ENCODE measurements at regions of chr13 and their contacts with region 1.

Region 1: DNA sequence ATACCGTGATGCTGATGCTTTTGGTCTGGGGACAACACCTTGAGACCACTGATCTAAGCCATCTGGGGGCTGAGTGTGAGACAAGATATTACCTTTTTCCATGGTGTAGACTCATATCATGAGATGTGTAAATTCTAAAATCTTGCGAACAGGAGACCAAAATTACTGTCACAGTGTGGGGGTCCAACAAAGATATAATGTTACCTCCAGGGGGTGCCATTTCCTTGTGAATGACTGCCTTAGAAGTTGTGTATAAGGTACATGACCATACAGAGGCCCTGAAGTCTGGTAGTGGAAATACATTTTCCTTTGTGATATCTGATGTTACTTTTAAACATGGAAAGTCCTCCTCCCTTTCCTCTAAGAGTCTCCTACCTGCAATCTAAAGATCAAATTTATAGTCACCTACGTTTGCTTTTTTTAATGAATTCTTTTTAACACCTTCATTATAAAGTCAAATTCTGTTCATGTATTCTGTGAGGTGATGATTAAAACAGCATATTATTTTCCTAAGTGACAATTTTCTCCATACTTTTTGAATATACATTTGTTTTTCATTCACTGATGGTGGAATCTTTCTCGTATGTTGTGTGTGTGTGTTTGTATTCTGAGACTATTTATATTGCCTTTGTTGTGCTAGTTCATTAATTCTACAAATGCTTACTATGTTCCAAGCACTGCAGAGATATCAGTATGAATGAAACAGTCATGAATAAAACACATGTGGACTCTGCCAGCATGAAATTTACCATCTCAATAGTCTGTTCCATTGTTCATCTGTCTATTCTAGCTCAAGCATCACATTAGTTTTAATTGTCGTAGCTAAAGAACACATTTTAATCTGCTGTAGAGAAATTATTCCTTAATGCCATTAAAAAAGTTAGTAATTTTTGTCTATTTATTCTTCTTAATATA is 113.7 kb downstream of the RFC3 start:
- DNase-seq: peak; percentile 43
- H3K4me3 ChIP-seq: no peak overlapping the region
- H3K27ac ChIP-seq: no peak overlapping the region
- H3K4me1 ChIP-seq: peaks cover 3% of the 10 kb centered on the region
- H3K27me3 ChIP-seq: no peaks in the 10 kb centered on the region
- CTCF ChIP-seq: peak; percentile 56

Region 2: DNA sequence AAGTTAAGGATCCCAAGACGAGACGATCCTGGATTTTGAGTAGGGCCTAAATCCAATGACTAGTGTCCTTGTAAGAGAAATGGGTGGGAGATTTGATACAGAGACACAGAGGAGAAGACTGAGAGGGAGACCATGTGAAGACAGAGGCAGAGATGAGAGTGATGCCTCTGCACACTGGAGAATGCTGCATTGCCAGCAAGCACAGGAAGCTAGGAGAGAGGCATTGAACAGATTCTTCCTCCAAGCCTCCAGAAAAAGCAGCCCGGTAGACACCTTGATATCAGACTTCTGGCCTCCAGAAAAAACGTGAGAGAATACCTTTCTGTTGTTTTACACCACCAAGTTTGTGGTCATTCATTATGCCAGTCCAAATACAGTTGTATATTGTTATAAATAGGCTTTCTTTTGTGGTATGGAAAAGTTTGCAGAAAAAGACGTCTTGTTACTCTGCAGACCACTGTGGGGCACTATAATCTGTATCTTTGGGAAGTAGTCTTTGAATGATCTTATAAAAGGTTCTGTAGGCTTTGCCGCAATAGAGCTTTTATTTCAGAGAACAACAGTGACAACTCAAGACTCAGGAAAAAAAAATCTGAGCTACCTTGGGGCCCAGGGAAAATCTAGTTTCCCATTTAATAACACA is 131.6 kb before region 1 on chr13:
- CTCF ChIA-PET with region 1: no interaction called
- dilution Hi-C with region 1: no loop called
- in situ Hi-C with region 1: no loop called
- intact Hi-C with region 1: loop called (anchors 5 kb)
- DNase-seq: peak; percentile 11
- H3K4me3 ChIP-seq: no peak overlapping the region
- H3K27ac ChIP-seq: no peak overlapping the region
- H3K4me1 ChIP-seq: peaks cover 8% of the 10 kb centered on the region
- H3K27me3 ChIP-seq: no peaks in the 10 kb centered on the region
- CTCF ChIP-seq: peak; percentile 48 to 55

Region 3: DNA sequence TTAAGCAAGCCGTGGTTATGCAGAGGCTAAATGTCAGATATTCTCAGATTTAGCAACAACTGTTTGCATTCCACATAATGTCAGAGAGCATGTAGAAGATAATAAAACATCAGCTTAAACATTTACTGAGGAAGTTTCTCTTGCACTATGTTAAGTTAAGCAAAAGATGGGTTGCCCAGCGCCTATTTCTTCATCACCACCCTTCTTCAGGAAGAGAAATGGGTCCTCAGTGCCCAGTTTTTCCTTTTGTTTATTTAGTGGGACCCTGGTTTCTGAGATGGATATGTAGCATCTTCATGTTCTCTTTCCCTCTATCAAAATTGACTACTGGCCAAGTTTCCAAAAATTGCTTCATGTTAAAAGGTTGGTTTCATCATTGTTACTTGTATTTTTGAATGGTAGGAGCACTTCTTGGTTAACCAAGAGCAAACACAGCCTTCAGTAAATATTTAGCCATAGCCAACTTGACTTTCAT is 243.1 kb after region 1 on chr13:
- CTCF ChIA-PET with region 1: no interaction called
- dilution Hi-C with region 1: no loop called
- in situ Hi-C with region 1: no loop called
- intact Hi-C with region 1: no loop called
- DNase-seq: no peak
- H3K4me3 ChIP-seq: no peak overlapping the region
- H3K27ac ChIP-seq: no peak overlapping the region
- H3K4me1 ChIP-seq: peaks cover 12% of the 10 kb centered on the region
- H3K27me3 ChIP-seq: no peaks in the 10 kb centered on the region
- CTCF ChIP-seq: no peak

Region 4: GRCh38 chr13:34300559-34300958 is 368.9 kb after region 1 on chr13:
- CTCF ChIA-PET with region 1: no interaction called
- dilution Hi-C with region 1: no loop called
- in situ Hi-C with region 1: no loop called
- intact Hi-C with region 1: loop called (anchors 5 kb)
- DNase-seq: peak; percentile 5
- H3K4me3 ChIP-seq: no peak overlapping the region
- H3K27ac ChIP-seq: no peak overlapping the region
- H3K4me1 ChIP-seq: peaks cover 30% of the 10 kb centered on the region
- H3K27me3 ChIP-seq: no peaks in the 10 kb centered on the region
- CTCF ChIP-seq: no peak

Region 5: DNA sequence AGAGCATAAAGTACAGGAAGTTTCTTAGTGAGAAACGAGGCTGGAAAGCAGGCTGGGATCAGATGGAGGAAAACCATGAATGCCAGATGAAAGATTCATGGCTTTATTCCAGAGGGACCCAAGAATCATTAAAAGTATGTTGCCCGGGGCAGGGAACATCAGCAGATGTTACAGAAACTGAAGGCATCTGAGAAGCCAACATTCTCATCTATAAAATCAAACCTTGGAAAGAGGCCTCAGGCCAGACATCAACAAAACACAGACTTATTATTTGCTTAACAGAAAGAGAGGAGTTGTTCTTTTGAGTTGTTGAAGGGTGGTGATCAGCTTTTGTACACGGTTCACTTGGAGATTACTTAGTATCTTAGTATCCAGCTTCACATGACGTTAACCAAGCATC is 429.9 kb after region 1 on chr13:
- CTCF ChIA-PET with region 1: no interaction called
- dilution Hi-C with region 1: no loop called
- in situ Hi-C with region 1: no loop called
- intact Hi-C with region 1: no loop called
- DNase-seq: peak; percentile 62
- H3K4me3 ChIP-seq: no peak overlapping the region
- H3K27ac ChIP-seq: peak overlapping the region; percentile 55
- H3K4me1 ChIP-seq: peaks cover 47% of the 10 kb centered on the region
- H3K27me3 ChIP-seq: no peaks in the 10 kb centered on the region
- CTCF ChIP-seq: no peak

Region 6: DNA sequence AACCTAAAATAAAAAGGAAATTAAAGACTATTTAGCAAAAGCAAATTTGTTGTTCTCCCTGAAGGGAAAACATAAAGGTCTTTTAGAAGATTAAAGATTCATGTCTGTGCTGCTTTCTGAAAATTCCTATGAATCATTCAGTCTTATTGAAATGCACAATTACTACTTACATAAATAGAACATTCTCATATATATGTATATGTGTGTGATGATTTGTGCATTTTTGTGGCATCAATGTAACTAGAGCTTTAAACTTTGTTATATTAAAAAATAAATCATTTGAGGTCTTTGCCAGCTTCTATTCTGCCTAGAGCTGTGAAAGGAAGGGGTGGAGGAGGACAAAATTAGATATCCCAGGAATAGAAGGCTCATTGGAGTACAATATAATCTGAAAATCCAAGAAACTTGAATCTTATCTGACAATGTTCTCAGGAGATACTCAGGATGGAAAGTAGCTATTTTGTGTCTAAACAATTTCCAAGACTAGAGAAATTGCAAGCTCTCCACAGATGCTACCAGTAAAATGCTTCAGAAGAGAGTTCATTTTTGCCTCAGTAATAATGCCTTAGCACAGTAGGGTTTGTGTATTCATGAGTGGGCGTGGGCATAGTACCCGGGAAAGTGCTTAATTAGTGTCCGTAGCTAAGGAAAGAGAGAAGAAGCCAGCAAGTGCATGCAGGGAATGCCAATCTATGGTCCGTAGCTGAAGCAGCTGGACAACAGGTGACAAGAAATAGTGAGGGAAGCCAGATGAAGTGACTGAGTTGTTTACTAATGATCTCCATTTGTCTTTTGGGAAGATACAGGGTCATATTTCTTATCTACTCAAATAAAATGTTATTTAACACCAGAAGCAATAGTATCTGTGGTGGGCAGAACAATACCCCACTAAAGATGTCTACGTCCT is 614.9 kb after region 1 on chr13:
- CTCF ChIA-PET with region 1: no interaction called
- dilution Hi-C with region 1: no loop called
- in situ Hi-C with region 1: no loop called
- intact Hi-C with region 1: no loop called
- DNase-seq: no peak
- H3K4me3 ChIP-seq: no peak overlapping the region
- H3K27ac ChIP-seq: no peak overlapping the region
- H3K4me1 ChIP-seq: no peaks in the 10 kb centered on the region
- H3K27me3 ChIP-seq: no peaks in the 10 kb centered on the region
- CTCF ChIP-seq: no peak

Region 7: DNA sequence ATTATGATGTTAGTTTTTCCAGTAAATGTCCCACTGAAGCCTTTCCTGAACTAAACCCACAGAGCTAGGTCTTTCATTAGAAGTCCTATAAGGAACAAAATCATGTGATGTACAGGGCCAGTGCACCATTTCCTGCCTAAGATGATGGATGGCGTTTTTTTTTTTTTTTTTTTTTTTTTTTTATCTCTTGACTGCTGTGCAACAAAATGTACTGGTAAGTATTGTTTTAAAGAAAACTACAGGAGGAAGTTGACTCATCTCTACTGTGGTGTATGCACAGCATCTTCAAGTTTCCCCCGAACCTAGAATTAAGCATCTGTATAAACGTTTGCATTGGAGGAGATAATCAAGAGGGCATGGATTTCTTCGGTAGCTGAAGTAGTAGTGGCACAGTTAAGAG is 1207.9 kb after region 1 on chr13:
- CTCF ChIA-PET with region 1: no interaction called
- dilution Hi-C with region 1: no loop called
- in situ Hi-C with region 1: loop called in 1 of 2 experiments (anchors 25 kb)
- intact Hi-C with region 1: no loop called
- DNase-seq: no peak
- H3K4me3 ChIP-seq: no peak overlapping the region
- H3K27ac ChIP-seq: no peak overlapping the region
- H3K4me1 ChIP-seq: no peaks in the 10 kb centered on the region
- H3K27me3 ChIP-seq: no peaks in the 10 kb centered on the region
- CTCF ChIP-seq: no peak

Region 8: DNA sequence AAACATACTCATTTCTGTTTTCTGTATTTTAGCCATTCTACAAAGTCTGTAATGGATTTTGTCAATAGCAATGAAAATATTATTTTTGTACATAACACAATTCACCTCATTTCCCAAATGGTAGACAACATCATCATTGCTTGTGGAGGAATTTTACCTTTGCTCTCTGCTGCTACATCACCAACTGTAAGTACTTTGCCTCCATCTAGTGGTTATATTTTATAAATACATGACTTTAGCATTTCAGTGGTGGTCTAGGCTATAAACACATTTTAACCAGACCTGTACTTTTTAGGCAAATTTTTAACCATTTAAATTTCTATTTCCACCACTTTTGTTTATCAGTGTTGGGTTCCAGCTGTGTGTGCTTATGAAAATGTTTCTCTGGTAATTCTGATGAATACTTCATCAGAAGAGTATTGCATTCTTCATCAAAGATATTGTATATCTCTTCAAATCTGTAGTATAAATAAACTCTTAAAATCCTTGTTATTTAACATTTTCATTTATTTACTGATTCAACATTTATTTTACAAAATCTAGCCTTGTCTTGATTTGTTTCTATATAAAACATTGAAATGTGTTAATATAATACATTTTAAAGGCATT is 1232.8 kb after region 1 on chr13:
- CTCF ChIA-PET with region 1: no interaction called
- dilution Hi-C with region 1: no loop called
- in situ Hi-C with region 1: loop called in 1 of 2 experiments (anchors 25 kb)
- intact Hi-C with region 1: loop called (anchors 2 kb)
- DNase-seq: peak; percentile 6
- H3K4me3 ChIP-seq: no peak overlapping the region
- H3K27ac ChIP-seq: no peak overlapping the region
- H3K4me1 ChIP-seq: no peaks in the 10 kb centered on the region
- H3K27me3 ChIP-seq: no peaks in the 10 kb centered on the region
- CTCF ChIP-seq: peak; percentile 50 to 63